ENCODE measurements at regions of chr14 and their contacts with region 1.

Region 1: DNA sequence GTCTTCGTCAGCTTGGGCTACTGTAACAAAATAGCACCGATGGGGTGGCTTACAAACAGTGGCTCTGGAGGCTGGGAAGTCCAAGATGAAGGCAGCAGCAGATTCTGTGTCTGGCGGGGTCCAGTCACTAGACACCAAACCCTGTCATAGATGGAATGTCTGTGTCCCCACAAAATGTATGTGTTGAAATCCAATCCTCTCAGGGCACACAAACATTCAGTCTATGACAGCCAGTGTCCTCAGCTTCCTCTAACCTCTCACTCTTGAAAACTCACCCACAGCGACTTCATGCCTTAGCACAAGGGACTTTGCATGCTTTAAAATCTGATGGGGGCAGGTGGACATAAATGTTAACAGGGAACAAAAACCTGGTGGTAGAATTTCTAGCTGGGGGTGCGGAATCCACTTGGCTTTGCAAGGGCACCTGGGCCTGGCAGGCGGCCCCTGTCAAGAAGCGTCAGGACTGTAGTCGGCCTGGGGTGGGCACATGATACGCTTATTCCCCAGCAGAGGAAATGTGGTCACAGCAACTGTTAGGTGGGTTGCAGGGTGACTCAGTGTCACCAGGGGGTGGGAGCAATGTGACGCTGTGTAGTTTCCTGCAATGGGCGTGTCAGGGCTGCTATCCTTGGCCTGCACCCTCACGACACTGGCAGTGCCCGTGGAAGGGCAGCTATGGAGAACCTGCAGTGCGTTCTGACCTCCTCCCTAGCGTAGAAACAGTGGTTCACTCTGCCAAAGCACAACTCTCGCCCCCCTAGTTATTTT is 17.7 kb downstream of the RIN3 start:
- DNase-seq: no peak
- ATAC-seq: no peak
- H3K4me3 Mint-ChIP-seq: no peak overlapping the region
- H3K27ac Mint-ChIP-seq: no peak overlapping the region
- H3K4me1 Mint-ChIP-seq: no peaks in the 10 kb centered on the region
- H3K27me3 Mint-ChIP-seq: no peaks in the 10 kb centered on the region
- CTCF ChIP-seq: no peak

Region 2: DNA sequence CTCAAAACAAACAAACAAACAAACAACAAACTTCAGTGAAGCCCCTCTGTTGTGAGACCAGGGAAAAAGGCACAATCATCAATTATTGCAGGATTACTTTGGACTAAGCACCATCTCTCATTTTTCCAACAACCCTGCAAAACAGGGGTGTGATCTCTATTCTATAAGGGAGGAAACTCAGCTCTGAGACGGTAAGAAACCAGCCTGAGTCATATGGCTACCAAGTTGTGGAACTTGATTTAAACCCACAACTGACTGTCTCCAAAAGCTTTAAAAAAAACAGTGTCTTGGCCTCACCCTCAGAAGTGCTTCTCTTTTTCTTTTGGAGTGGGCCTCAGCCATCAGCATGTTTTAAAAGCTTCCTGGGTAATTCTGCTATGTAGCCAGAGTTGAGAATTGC is 32.1 kb after region 1 on chr14:
- CTCF ChIA-PET with region 1: no interaction called
- POLR2A ChIA-PET with region 1: no interaction called
- DNase-seq: no peak
- ATAC-seq: no peak
- H3K4me3 Mint-ChIP-seq: no peak overlapping the region
- H3K27ac Mint-ChIP-seq: no peak overlapping the region
- H3K4me1 Mint-ChIP-seq: no peaks in the 10 kb centered on the region
- H3K27me3 Mint-ChIP-seq: no peaks in the 10 kb centered on the region; the same call in 1 of the 2 replicates
- CTCF ChIP-seq: no peak

Region 3: DNA sequence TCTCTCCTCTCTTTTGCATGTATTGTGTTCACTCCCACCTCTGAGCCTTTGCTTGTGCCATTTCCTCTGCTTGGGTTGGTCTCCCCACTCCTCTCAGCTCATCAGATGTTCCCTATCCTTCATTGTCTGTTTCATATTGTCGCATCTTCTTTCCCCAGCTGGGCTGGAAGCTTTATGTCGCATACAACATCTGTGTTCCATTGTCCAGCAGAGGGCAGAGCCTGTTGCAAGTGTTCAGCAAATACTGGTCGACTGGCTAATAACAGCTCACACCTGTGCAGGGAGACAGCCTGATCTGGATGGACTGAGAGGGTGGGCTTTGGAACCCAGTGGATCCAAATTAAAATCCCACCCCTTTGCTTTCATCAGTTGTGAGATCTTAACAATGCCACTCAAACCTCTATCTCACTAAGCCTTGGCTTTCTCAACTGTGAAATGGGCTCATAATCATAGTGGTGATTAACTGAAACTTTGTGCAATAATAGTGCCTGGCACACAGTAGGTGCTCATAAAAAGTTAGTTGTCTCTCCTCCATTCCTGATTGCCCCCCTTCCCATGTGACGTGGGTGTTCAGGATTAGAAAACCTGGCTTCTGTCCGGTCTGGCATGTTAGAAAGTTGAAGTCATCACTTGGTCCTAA is 58.0 kb after region 1 on chr14:
- CTCF ChIA-PET with region 1: no interaction called
- POLR2A ChIA-PET with region 1: interaction called, 10 read pairs
- DNase-seq: no peak
- ATAC-seq: peak; percentile 47; the same call in 1 of the 2 replicates
- H3K4me3 Mint-ChIP-seq: no peak overlapping the region
- H3K27ac Mint-ChIP-seq: no peak overlapping the region
- H3K4me1 Mint-ChIP-seq: no peaks in the 10 kb centered on the region
- H3K27me3 Mint-ChIP-seq: peaks cover 2% of the 10 kb centered on the region; the same call in 1 of the 2 replicates
- CTCF ChIP-seq: no peak